ENCODE measurements at regions of chr12 and their contacts with region 1.

Region 1: GRCh38 chr12:53746592-53747092 is 5.1 kb downstream of the CISTR start:
- DNase-seq: peak; percentile 94
- ATAC-seq: peak; percentile 94
- H3K4me3 ChIP-seq: peak overlapping the region; percentile 7; the same call in 1 of the 2 replicates
- H3K27ac ChIP-seq: no peak overlapping the region
- H3K4me1 ChIP-seq: peaks cover 14% of the 10 kb centered on the region; the same call in 1 of the 2 replicates
- H3K27me3 ChIP-seq: 0 out of 2 replicates have a peak, but pooled peaks cover 3% of the 10 kb centered on the region
- CTCF ChIP-seq: peak; percentile 99

Region 2: DNA sequence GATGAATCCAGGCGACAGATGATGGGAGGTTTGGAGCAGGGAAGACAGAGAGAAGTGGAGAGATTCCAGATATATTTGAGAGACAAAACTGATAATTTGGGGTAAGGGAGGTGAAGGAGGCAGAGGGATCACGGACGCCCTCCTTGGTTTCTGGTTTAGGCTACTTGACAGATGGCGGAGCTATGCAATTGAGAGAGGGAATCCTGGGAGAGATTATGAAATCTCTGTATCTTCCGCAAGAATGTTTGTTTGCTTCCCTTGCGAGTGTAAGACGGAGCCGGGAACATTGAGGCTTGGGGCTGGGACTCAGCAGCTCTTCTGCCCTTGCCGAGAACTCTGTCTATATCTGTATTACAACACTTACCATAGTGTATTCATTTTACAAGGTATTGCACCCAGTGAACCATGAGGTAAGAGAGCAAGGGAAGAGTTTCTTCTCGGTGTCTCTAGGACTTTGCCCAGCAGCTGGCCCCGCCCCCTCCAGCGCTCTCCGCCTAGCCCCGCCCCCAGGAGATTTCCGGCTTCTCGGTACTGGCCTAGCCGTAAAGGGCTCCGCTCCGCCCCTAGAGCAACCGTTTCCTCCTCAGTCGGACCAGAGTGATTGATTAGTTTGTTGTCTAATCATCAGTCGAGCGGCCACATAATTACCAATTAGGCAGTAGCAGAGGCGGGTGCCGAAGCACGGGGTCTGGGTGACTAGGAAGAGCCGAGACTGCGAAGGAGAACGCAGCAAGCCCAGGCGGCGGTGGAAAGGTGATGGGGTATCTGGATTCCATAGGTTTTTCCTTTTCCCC is 305.4 kb before region 1 on chr12 and contains the start of gene PRR13:
- CTCF ChIA-PET with region 1: interaction called, 13 read pairs
- POLR2A ChIA-PET with region 1: no interaction called
- intact Hi-C with region 1: no loop called
- DNase-seq: peak; percentile 99
- ATAC-seq: peak; percentile 97
- H3K4me3 ChIP-seq: peak within 1 kb of the TSS; percentile 78
- H3K27ac ChIP-seq: peak within 1 kb of the TSS; percentile 34
- H3K4me1 ChIP-seq: peaks cover 12% of the 10 kb centered on the region; the same call in 1 of the 2 replicates
- H3K27me3 ChIP-seq: no peaks in the 10 kb centered on the region
- CTCF ChIP-seq: no peak
- total RNA-seq, gene PRR13: 54.2 and 60.9 TPM in 2 replicates

Region 3: DNA sequence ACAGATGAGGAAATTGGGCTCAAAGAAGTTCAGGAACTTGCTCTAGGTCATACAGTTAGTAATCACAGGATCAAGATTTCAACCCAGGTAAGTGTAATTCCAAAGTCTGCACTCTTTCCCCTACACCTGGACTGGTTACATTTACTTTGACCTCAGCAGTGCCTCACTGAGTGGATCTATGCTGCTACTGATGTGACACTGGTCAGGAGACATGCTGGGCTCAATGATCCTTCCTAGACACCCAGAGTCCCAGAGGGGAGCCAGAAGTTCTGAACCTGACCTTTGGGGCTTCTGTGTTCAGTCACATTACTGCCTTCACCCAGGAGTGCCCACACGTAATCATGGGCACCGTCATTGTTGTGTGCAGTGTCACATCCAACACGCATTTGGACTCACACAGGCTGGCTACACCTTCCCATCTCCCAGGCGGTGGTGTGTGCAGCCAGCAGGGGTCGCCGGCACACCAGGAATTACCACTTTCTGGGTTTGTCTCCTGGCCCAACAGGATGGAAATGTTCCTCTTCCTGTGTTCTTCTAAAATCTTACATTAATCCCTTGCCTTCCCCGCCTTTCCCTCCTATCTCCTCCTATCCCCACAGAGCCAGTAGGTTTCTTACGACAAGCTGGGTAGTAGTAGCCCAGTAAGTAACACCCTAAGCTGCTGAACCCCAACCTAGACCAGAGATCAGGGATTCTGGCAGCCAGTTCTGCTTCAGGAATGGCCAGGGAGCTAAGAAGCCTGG is 45.0 kb before region 1 on chr12:
- CTCF ChIA-PET with region 1: interaction called, 15 read pairs
- POLR2A ChIA-PET with region 1: interaction called, 4 read pairs
- intact Hi-C with region 1: loop called (anchors 1 kb)
- DNase-seq: peak; percentile 81
- ATAC-seq: peak; percentile 99
- H3K4me3 ChIP-seq: no peak overlapping the region
- H3K27ac ChIP-seq: no peak overlapping the region
- H3K4me1 ChIP-seq: no peaks in the 10 kb centered on the region
- H3K27me3 ChIP-seq: 0 out of 2 replicates have a peak, but pooled peaks cover 4% of the 10 kb centered on the region
- CTCF ChIP-seq: peak; percentile 94

Measured in PC-3 (cell line).